Aorta (tissue), 5 donors: ENCODE measurements at regions of chr5 and their contacts with region 1.

Region 1: GRCh38 chr5:57887851-57888621 is 405.4 kb upstream of the ACTBL2 start:
- DNase-seq: peak in 1 of 2 donors; percentile 41
- ATAC-seq: no peak
- H3K4me3 ChIP-seq: no peak overlapping the region
- H3K27ac ChIP-seq: no peak overlapping the region
- H3K4me1 ChIP-seq: peaks cover 0 to 3% of the 10 kb centered on the region in 2 donors
- H3K27me3 ChIP-seq: no peaks in the 10 kb centered on the region

Region 2: GRCh38 chr5:57298295-57298984 is 589.6 kb before region 1 on chr5:
- intact Hi-C with region 1: loop called (anchors 10 kb)
- DNase-seq: peak; percentile 85 to 86
- ATAC-seq: peak; percentile 93
- H3K4me3 ChIP-seq: no peak overlapping the region
- H3K27ac ChIP-seq: peak overlapping the region in 1 of 2 donors; percentile 30
- H3K4me1 ChIP-seq: peaks cover 0 to 3% of the 10 kb centered on the region in 2 donors
- H3K27me3 ChIP-seq: no peaks in the 10 kb centered on the region

Region 3: GRCh38 chr5:57703721-57704120 is 184.3 kb before region 1 on chr5:
- intact Hi-C with region 1: no loop called
- DNase-seq: no peak
- ATAC-seq: no peak
- H3K4me3 ChIP-seq: no peak overlapping the region
- H3K27ac ChIP-seq: no peak overlapping the region
- H3K4me1 ChIP-seq: peaks cover 0 to 1% of the 10 kb centered on the region in 2 donors
- H3K27me3 ChIP-seq: no peaks in the 10 kb centered on the region

Region 4: GRCh38 chr5:57779383-57780223 is 108.4 kb before region 1 on chr5:
- intact Hi-C with region 1: loop called (anchors 5 to 10 kb)
- DNase-seq: no peak
- ATAC-seq: peak; percentile 81
- H3K4me3 ChIP-seq: no peak overlapping the region
- H3K27ac ChIP-seq: no peak overlapping the region
- H3K4me1 ChIP-seq: peaks cover 2 to 7% of the 10 kb centered on the region in 2 donors
- H3K27me3 ChIP-seq: no peaks in the 10 kb centered on the region